HepG2 (cell line): ENCODE measurements at regions of chr7 and their contacts with region 1.

Region 1: GRCh38 chr7:148286150-148286549 is 304.4 kb upstream of the C7orf33 start:
- DNase-seq: peak; percentile 44
- ATAC-seq: peak; percentile 94
- H3K4me3 ChIP-seq: no peak overlapping the region
- H3K27ac ChIP-seq: no peak overlapping the region
- H3K4me1 ChIP-seq: no peaks in the 10 kb centered on the region
- H3K27me3 ChIP-seq: no peaks in the 10 kb centered on the region
- CTCF ChIP-seq: peak; percentile 76
- EP300 ChIP-seq: no peak
- POLR2A ChIP-seq: no peak
- RAD21 ChIP-seq: peak; percentile 34; the same call in 1 of the 2 replicates

Region 2: DNA sequence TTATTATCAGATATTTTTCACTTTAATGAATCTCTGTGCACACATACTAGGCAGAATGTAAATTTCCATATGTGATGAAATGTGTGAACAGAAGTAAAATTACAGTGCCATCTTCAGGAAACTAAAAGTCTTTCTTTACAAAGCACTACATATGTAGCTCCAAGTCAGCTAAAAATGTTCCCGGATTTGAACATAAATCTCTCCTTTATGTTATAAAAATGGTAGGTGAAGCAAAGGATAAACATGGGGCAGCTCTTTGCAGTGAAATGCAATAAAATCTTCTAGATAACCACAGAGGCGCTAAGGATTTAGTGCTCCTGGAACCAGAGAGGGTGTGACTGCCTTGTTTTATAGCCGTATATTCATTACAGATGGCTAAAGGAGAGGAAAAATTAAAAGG is 199.5 kb after region 1 on chr7:
- CTCF ChIA-PET with region 1: interaction called, 7 read pairs
- POLR2A ChIA-PET with region 1: no interaction called
- in situ Hi-C with region 1: no loop called
- intact Hi-C with region 1: loop called (anchors 1 kb)
- DNase-seq: no peak
- ATAC-seq: peak; percentile 34; the same call in 1 of the 3 replicates
- H3K4me3 ChIP-seq: no peak overlapping the region
- H3K27ac ChIP-seq: no peak overlapping the region
- H3K4me1 ChIP-seq: peaks cover 14% of the 10 kb centered on the region
- H3K27me3 ChIP-seq: peaks cover 2 to 6% of the 10 kb centered on the region in 2 experiments; a peak in 2 of 5 replicates
- CTCF ChIP-seq: peak; percentile 50
- EP300 ChIP-seq: no peak
- POLR2A ChIP-seq: no peak
- RAD21 ChIP-seq: no peak

Region 3: DNA sequence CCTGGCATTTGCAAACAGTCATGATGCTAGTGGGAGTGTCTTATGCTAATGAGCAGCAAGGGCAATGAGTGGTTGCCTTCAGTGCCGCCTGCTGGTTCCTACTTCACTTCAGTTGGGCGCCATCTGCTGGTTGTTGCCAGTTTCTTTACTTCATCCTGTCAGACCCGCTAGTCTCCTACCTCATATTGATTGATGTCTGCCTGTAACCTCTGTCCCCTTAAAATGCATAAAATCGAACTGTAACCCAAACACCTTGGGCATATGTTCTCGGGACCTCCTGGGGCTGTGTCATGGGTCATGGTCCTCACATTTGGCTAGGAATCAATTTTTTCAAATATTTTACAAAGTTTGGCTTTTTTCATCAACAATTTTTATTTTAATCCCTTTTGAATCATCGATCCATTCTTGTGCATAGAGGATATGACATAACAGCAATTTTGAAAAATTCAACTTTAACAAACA is 241.6 kb after region 1 on chr7:
- CTCF ChIA-PET with region 1: interaction called, 11 read pairs
- POLR2A ChIA-PET with region 1: no interaction called
- in situ Hi-C with region 1: no loop called
- intact Hi-C with region 1: loop called (anchors 1 kb)
- DNase-seq: peak; percentile 88
- ATAC-seq: peak; percentile 97
- H3K4me3 ChIP-seq: peak overlapping the region in 1 of 3 experiments; percentile 46; a peak in 1 of 6 replicates
- H3K27ac ChIP-seq: no peak overlapping the region
- H3K4me1 ChIP-seq: peaks cover 31% of the 10 kb centered on the region
- H3K27me3 ChIP-seq: 0 out of 5 replicates have a peak, but pooled peaks cover 0 to 5% of the 10 kb centered on the region in 2 experiments
- CTCF ChIP-seq: peak; percentile 86
- EP300 ChIP-seq: no peak
- POLR2A ChIP-seq: no peak
- RAD21 ChIP-seq: peak; percentile 72

Region 4: DNA sequence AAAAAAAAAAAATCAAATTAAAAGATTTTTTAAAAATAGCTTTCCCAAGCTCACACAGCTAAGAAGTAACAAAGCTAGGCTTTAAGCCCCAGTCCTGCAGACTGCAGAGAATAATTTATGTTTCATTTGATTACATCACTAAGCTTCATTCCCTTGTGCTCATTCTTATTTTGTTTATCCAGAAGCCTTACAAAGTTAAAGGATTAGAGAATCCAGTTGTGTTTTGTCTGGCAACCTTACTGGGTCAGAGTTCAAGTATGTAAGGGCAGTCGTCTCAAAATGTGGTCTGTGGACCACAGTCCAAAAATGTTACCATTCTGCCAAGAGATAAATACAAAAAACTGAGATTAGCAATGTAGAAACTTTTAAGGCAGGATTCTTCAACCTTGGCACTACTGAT is 630.0 kb after region 1 on chr7:
- CTCF ChIA-PET with region 1: no interaction called
- POLR2A ChIA-PET with region 1: no interaction called
- in situ Hi-C with region 1: no loop called
- intact Hi-C with region 1: no loop called
- DNase-seq: no peak
- ATAC-seq: no peak
- H3K4me3 ChIP-seq: no peak overlapping the region
- H3K27ac ChIP-seq: no peak overlapping the region
- H3K4me1 ChIP-seq: no peaks in the 10 kb centered on the region
- H3K27me3 ChIP-seq: peaks cover 0 to 17% of the 10 kb centered on the region in 2 experiments; a peak in 1 of 5 replicates
- CTCF ChIP-seq: no peak
- EP300 ChIP-seq: no peak
- POLR2A ChIP-seq: no peak
- RAD21 ChIP-seq: no peak